ENCODE measurements at regions of chr9 and their contacts with region 1.

Region 1: DNA sequence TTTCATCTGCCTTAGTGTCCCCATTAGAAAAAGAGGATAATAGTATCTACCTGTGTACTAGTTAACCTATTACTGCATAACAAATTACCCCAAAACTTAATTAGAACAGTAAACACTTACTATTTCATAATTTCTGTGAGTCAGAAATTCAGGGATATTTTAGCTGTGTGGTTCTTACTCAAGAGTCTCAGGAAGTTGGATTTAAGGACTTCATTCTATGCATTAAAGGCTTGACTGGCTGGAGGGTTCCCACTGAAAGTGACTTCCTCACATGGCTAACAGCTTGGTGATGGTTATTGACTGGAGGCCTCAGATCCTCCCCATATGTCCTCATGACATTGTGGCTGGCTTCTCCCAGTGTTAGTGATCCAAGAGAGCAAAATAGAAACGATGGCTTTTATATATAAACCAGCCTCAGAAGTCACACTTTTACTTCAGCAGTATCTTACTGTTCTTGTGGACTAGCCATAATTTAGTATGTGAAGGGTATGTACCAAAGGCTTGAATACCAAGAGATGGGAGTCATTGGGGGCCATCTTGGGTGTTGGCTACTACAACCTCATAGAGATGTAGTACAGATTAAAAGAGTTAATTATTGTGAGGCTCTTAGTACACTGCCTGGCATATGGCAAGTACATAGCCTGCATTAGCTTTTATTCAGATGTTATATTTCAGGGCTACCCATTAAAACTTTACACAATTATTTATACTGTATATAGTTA is 9.9 kb downstream of the RAD23B start:
- DNase-seq: peak in 1 of 2 experiments; percentile 43
- H3K4me3 ChIP-seq: no peak overlapping the region
- H3K27ac ChIP-seq: peak overlapping the region; percentile 23
- H3K4me1 ChIP-seq: peaks cover 64% of the 10 kb centered on the region
- H3K27me3 ChIP-seq: no peaks in the 10 kb centered on the region
- CTCF ChIP-seq: no peak

Region 2: GRCh38 chr9:107198718-107199117 is 94.3 kb before region 1 on chr9:
- CTCF ChIA-PET with region 1: no interaction called
- POLR2A ChIA-PET with region 1: no interaction called
- intact Hi-C with region 1: no loop called
- DNase-seq: no peak
- H3K4me3 ChIP-seq: no peak overlapping the region
- H3K27ac ChIP-seq: no peak overlapping the region
- H3K4me1 ChIP-seq: no peaks in the 10 kb centered on the region
- H3K27me3 ChIP-seq: no peaks in the 10 kb centered on the region
- CTCF ChIP-seq: no peak

Region 3: GRCh38 chr9:107309271-107309670 is 16.3 kb after region 1 on chr9:
- CTCF ChIA-PET with region 1: interaction called, 17 read pairs
- POLR2A ChIA-PET with region 1: no interaction called
- intact Hi-C with region 1: no loop called
- DNase-seq: no peak
- H3K4me3 ChIP-seq: no peak overlapping the region
- H3K27ac ChIP-seq: no peak overlapping the region
- H3K4me1 ChIP-seq: no peaks in the 10 kb centered on the region
- H3K27me3 ChIP-seq: no peaks in the 10 kb centered on the region
- CTCF ChIP-seq: no peak

Region 4: GRCh38 chr9:109224751-109225150 is 1931.8 kb after region 1 on chr9:
- CTCF ChIA-PET with region 1: no interaction called
- POLR2A ChIA-PET with region 1: interaction called, 10 read pairs
- intact Hi-C with region 1: no loop called
- DNase-seq: no peak
- H3K4me3 ChIP-seq: no peak overlapping the region
- H3K27ac ChIP-seq: no peak overlapping the region
- H3K4me1 ChIP-seq: no peaks in the 10 kb centered on the region
- H3K27me3 ChIP-seq: no peaks in the 10 kb centered on the region
- CTCF ChIP-seq: no peak

Measured in PC-9 (cell line).